HepG2 (cell line): ENCODE measurements at regions of chr12 and their contacts with region 1.

Region 1: GRCh38 chr12:51814311-51815088 is 34.0 kb downstream of the FIGNL2 start:
- DNase-seq: peak; percentile 62
- ATAC-seq: peak; percentile 91
- H3K4me3 ChIP-seq: peak overlapping the region; percentile 65 to 83 (median 74)
- H3K27ac ChIP-seq: no peak overlapping the region
- H3K4me1 ChIP-seq: peaks cover 11% of the 10 kb centered on the region; the same call in 1 of the 2 replicates
- H3K27me3 ChIP-seq: 0 out of 5 replicates have a peak, but pooled peaks cover 1 to 4% of the 10 kb centered on the region in 2 experiments
- CTCF ChIP-seq: peak; percentile 76
- EP300 ChIP-seq: 0 out of 4 replicates have a peak, but pooled peaks of 1 of the 2 experiments have one; percentile 6
- POLR2A ChIP-seq: peak; percentile 36 to 76; a peak in 2 of 4 replicates
- RAD21 ChIP-seq: peak; percentile 93

Region 2: GRCh38 chr12:51531978-51532497 is 282.5 kb before region 1 on chr12:
- CTCF ChIA-PET with region 1: no interaction called
- POLR2A ChIA-PET with region 1: no interaction called
- in situ Hi-C with region 1: loop called (anchors 10 kb)
- intact Hi-C with region 1: loop called (anchors 5 kb)
- DNase-seq: peak; percentile 43
- ATAC-seq: peak; percentile 92
- H3K4me3 ChIP-seq: no peak overlapping the region
- H3K27ac ChIP-seq: no peak overlapping the region
- H3K4me1 ChIP-seq: no peaks in the 10 kb centered on the region; the same call in 1 of the 2 replicates
- H3K27me3 ChIP-seq: peaks cover 0 to 15% of the 10 kb centered on the region in 2 experiments; a peak in 2 of 5 replicates
- CTCF ChIP-seq: peak; percentile 91
- EP300 ChIP-seq: no peak
- POLR2A ChIP-seq: no peak
- RAD21 ChIP-seq: peak; percentile 59

Region 3: DNA sequence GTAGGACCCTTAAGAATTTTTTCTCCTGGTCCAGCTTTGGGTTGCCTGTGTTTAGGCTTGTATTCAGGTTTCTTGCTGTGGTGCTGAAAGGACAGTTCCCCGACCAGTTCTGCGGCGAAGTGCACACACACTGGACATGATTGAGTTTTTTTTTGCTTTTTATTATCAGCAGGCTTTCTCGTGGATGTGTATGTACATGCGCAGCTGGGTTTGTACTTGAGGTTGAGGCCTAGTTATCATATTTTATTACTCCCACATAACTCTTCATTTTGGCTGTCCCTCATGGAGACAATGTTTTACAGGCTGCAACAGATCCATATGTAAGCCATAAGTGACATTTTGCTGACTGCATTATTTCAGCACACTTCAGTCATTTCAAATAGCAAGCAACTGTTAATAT is 221.0 kb before region 1 on chr12:
- CTCF ChIA-PET with region 1: no interaction called
- POLR2A ChIA-PET with region 1: no interaction called
- in situ Hi-C with region 1: no loop called
- intact Hi-C with region 1: loop called (anchors 2 kb)
- DNase-seq: peak; percentile 20
- ATAC-seq: no peak
- H3K4me3 ChIP-seq: no peak overlapping the region
- H3K27ac ChIP-seq: no peak overlapping the region
- H3K4me1 ChIP-seq: peaks cover 8% of the 10 kb centered on the region
- H3K27me3 ChIP-seq: no peaks in the 10 kb centered on the region
- CTCF ChIP-seq: no peak
- EP300 ChIP-seq: no peak
- POLR2A ChIP-seq: no peak
- RAD21 ChIP-seq: no peak

Region 4: DNA sequence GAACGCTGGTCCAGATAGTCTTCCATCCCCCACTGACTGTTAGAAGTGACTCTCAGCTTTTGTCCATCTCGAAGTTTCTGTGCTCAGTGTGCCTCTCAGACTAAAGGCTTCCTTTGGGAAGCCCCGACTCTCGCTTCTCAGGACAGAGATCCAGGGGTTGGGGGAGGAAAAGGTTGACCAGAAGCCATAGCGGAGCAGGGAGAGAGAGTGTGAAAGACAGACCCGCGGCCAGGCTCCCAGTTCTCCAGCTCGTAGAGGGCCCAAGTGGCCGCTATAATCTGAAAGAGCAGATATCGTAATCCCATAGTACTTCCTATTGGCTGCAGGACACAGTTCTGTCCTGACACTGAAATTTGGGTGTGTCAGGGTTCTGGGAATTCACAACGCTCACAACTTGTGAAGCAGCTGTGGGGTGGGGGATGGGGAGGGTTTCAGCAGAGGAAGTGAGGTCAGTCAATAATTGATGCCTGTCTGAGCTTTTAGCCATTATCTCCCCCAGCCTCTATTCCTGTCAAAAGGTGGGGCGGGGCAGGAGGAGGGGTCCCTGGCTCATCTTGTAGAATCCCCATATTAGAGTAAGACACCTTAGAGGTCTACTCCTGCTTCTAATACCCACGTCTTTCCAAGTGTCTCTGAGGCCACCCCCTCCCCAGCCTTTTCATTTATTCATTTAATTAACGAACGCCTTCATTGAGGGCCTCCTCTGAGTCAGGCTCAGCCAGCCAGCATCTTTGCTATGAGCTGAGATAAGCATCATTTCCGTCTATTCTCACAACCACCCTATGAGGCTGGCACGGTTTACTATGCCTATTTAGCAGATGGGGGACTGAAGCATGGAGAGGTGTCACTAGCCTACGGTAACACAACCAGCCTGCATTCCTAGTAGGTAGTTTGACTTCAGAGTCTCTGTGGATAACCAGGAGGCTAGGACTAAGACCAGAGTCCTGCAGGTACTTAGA is 91.2 kb after region 1 on chr12:
- CTCF ChIA-PET with region 1: no interaction called
- POLR2A ChIA-PET with region 1: no interaction called
- in situ Hi-C with region 1: no loop called
- intact Hi-C with region 1: no loop called
- DNase-seq: no peak
- ATAC-seq: no peak; the same call in 2 of the 3 replicates
- H3K4me3 ChIP-seq: no peak overlapping the region
- H3K27ac ChIP-seq: no peak overlapping the region
- H3K4me1 ChIP-seq: no peaks in the 10 kb centered on the region
- H3K27me3 ChIP-seq: peaks cover 2 to 44% of the 10 kb centered on the region in 2 experiments; a peak in 4 of 5 replicates
- CTCF ChIP-seq: no peak
- EP300 ChIP-seq: no peak
- POLR2A ChIP-seq: no peak
- RAD21 ChIP-seq: no peak